ENCODE measurements at regions of chr11 and their contacts with region 1.

Region 1: DNA sequence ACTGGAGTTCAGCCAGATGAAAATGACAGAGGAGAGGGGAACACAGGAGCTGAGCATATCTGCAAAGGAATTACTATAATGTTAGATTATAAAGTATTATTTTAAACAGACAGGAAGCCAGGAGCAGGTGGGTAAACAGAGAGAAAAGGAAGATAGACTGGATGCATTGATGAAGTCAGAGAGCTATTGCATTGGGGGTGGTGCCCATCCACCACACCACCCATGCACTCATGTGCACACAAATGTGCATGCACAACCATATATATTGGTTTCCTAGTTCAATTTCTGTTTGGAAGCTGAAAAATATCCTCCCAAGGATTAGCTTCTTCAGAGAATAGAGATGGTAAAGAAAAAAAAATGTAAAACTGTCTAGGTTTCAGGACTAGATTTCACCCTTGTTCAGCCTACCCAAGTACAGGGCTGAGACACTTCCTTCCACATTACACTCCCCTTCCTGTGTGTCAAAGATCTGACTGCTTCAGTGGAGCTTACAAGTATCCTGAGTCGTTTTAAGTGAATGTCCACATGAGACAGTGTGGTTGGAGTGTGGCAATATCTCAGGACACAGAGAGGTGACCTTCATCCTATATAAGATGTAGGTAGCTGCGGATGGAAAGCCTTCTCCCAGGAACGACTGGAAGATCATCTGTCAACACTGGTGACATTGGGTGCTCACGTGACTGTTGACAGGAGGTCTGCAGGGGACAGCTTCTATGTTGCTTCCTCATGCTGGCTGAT is 12.2 kb upstream of the SMPD1 start:
- DNase-seq: peak in 1 of 5 donors; percentile 37
- H3K4me3 ChIP-seq: peak overlapping the region; percentile 32
- H3K4me3 Mint-ChIP-seq: peak overlapping the region in 2 of 7 donors; percentile 52 to 60
- H3K27ac ChIP-seq: no peak overlapping the region
- H3K27ac Mint-ChIP-seq: peak overlapping the region in 3 of 8 donors; percentile 51 to 78 (median 56)
- H3K4me1 ChIP-seq: peaks cover 21% of the 10 kb centered on the region
- H3K4me1 Mint-ChIP-seq: peaks cover 14 to 22% (median 17%) of the 10 kb centered on the region in 3 donors
- H3K27me3 ChIP-seq: no peaks in the 10 kb centered on the region
- H3K27me3 Mint-ChIP-seq: no peaks in the 10 kb centered on the region

Region 2: GRCh38 chr11:6298605-6299004 is 79.5 kb before region 1 on chr11:
- CTCF ChIA-PET with region 1: no interaction called
- POLR2A ChIA-PET with region 1: no interaction called
- DNase-seq: no peak
- H3K4me3 ChIP-seq: no peak overlapping the region
- H3K4me3 Mint-ChIP-seq: no peak overlapping the region
- H3K27ac ChIP-seq: no peak overlapping the region
- H3K27ac Mint-ChIP-seq: no peak overlapping the region
- H3K4me1 ChIP-seq: no peaks in the 10 kb centered on the region
- H3K4me1 Mint-ChIP-seq: no peaks in the 10 kb centered on the region
- H3K27me3 ChIP-seq: no peaks in the 10 kb centered on the region
- H3K27me3 Mint-ChIP-seq: peaks cover 8 to 40% of the 10 kb centered on the region in 2 donors

Region 3: DNA sequence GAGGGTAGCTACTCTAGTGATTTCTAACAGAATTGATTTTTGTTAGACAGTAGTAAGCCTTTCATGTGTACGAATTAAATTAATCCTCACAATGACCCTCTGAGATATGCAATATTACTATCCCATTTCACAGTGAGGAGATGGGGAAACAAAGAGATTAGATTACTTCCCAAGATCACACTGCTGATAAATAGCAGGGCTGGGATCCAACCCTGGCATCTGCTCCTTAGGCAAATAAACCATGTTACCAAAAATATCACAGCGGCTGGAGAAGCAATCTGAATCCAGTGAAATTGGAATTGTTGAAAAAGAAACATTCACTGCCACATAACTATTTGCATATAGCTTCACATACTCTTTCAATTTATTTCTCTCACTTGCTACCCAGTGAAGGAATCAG is 45.0 kb before region 1 on chr11:
- CTCF ChIA-PET with region 1: no interaction called
- POLR2A ChIA-PET with region 1: no interaction called
- DNase-seq: no peak
- H3K4me3 ChIP-seq: no peak overlapping the region
- H3K4me3 Mint-ChIP-seq: no peak overlapping the region
- H3K27ac ChIP-seq: no peak overlapping the region
- H3K27ac Mint-ChIP-seq: no peak overlapping the region
- H3K4me1 ChIP-seq: no peaks in the 10 kb centered on the region
- H3K4me1 Mint-ChIP-seq: no peaks in the 10 kb centered on the region
- H3K27me3 ChIP-seq: no peaks in the 10 kb centered on the region
- H3K27me3 Mint-ChIP-seq: peaks cover 0 to 15% of the 10 kb centered on the region in 2 donors

Region 4: GRCh38 chr11:6362873-6363678 is 15.0 kb before region 1 on chr11:
- CTCF ChIA-PET with region 1: interaction called, 46 read pairs
- POLR2A ChIA-PET with region 1: no interaction called
- DNase-seq: peak; percentile 28 to 73 (median 33)
- H3K4me3 ChIP-seq: no peak overlapping the region
- H3K4me3 Mint-ChIP-seq: no peak overlapping the region
- H3K27ac ChIP-seq: no peak overlapping the region
- H3K27ac Mint-ChIP-seq: peak overlapping the region in 2 of 8 donors; percentile 6 to 87
- H3K4me1 ChIP-seq: no peaks in the 10 kb centered on the region
- H3K4me1 Mint-ChIP-seq: no peaks in the 10 kb centered on the region
- H3K27me3 ChIP-seq: no peaks in the 10 kb centered on the region
- H3K27me3 Mint-ChIP-seq: no peaks in the 10 kb centered on the region

Region 5: GRCh38 chr11:6402561-6402981 is 24.5 kb after region 1 on chr11:
- CTCF ChIA-PET with region 1: interaction called, 100 read pairs
- POLR2A ChIA-PET with region 1: no interaction called
- DNase-seq: peak; percentile 50 to 97 (median 89)
- H3K4me3 ChIP-seq: peak overlapping the region; percentile 66
- H3K4me3 Mint-ChIP-seq: peak overlapping the region; percentile 69 to 94 (median 85)
- H3K27ac ChIP-seq: peak overlapping the region; percentile 41
- H3K27ac Mint-ChIP-seq: peak overlapping the region; percentile 93 to 99 (median 98)
- H3K4me1 ChIP-seq: peaks cover 88% of the 10 kb centered on the region
- H3K4me1 Mint-ChIP-seq: peaks cover 76 to 96% (median 91%) of the 10 kb centered on the region in 3 donors
- H3K27me3 ChIP-seq: no peaks in the 10 kb centered on the region
- H3K27me3 Mint-ChIP-seq: peaks cover 0 to 5% of the 10 kb centered on the region in 2 donors

Region 6: GRCh38 chr11:6419009-6419631 is 41.0 kb after region 1 on chr11 and contains the start of gene APBB1:
- CTCF ChIA-PET with region 1: interaction called, 25 read pairs
- POLR2A ChIA-PET with region 1: interaction called, 3 read pairs
- DNase-seq: peak; percentile 61 to 83 (median 75)
- H3K4me3 ChIP-seq: peak within 1 kb of the TSS; percentile 77
- H3K4me3 Mint-ChIP-seq: peak within 1 kb of the TSS in 4 of 7 donors; percentile 81 to 93 (median 87)
- H3K27ac ChIP-seq: peak within 1 kb of the TSS; percentile 57
- H3K27ac Mint-ChIP-seq: peak within 1 kb of the TSS; percentile 70 to 96 (median 84)
- H3K4me1 ChIP-seq: peaks cover 49% of the 10 kb centered on the region
- H3K4me1 Mint-ChIP-seq: peaks cover 6 to 10% (median 6%) of the 10 kb centered on the region in 3 donors
- H3K27me3 ChIP-seq: no peaks in the 10 kb centered on the region
- H3K27me3 Mint-ChIP-seq: peaks cover 7 to 15% of the 10 kb centered on the region in 2 donors
- total RNA-seq, gene APBB1: 41.7 to 43.6 TPM

Region 7: GRCh38 chr11:6443269-6444003 is 65.4 kb after region 1 on chr11:
- CTCF ChIA-PET with region 1: interaction called, 467 read pairs
- POLR2A ChIA-PET with region 1: interaction called, 7 read pairs
- DNase-seq: peak; percentile 33 to 69 (median 44)
- H3K4me3 ChIP-seq: no peak overlapping the region
- H3K4me3 Mint-ChIP-seq: no peak overlapping the region
- H3K27ac ChIP-seq: no peak overlapping the region
- H3K27ac Mint-ChIP-seq: no peak overlapping the region
- H3K4me1 ChIP-seq: peaks cover 21% of the 10 kb centered on the region
- H3K4me1 Mint-ChIP-seq: no peaks in the 10 kb centered on the region
- H3K27me3 ChIP-seq: no peaks in the 10 kb centered on the region
- H3K27me3 Mint-ChIP-seq: no peaks in the 10 kb centered on the region

Region 8: GRCh38 chr11:6473481-6474422 is 95.7 kb after region 1 on chr11 and contains the start of gene TRIM3:
- CTCF ChIA-PET with region 1: interaction called, 24 read pairs
- POLR2A ChIA-PET with region 1: no interaction called
- DNase-seq: peak; percentile 55 to 83 (median 80)
- H3K4me3 ChIP-seq: peak within 1 kb of the TSS; percentile 66
- H3K4me3 Mint-ChIP-seq: peak within 1 kb of the TSS; percentile 80 to 94 (median 89)
- H3K27ac ChIP-seq: peak within 1 kb of the TSS; percentile 65
- H3K27ac Mint-ChIP-seq: peak within 1 kb of the TSS; percentile 53 to 95 (median 88)
- H3K4me1 ChIP-seq: peaks cover 14% of the 10 kb centered on the region
- H3K4me1 Mint-ChIP-seq: peaks cover 15 to 30% (median 20%) of the 10 kb centered on the region in 3 donors
- H3K27me3 ChIP-seq: no peaks in the 10 kb centered on the region
- H3K27me3 Mint-ChIP-seq: no peaks in the 10 kb centered on the region
- total RNA-seq, gene TRIM3: 6.4 to 6.8 TPM

Region 9: GRCh38 chr11:6505577-6506240 is 127.6 kb after region 1 on chr11:
- CTCF ChIA-PET with region 1: interaction called, 64 read pairs
- POLR2A ChIA-PET with region 1: interaction called, 3 read pairs
- DNase-seq: peak in 2 of 5 donors; percentile 17 to 21
- H3K4me3 ChIP-seq: no peak overlapping the region
- H3K4me3 Mint-ChIP-seq: no peak overlapping the region
- H3K27ac ChIP-seq: no peak overlapping the region
- H3K27ac Mint-ChIP-seq: peak overlapping the region in 2 of 8 donors; percentile 17 to 57
- H3K4me1 ChIP-seq: no peaks in the 10 kb centered on the region
- H3K4me1 Mint-ChIP-seq: peaks cover 5 to 11% (median 8%) of the 10 kb centered on the region in 3 donors
- H3K27me3 ChIP-seq: no peaks in the 10 kb centered on the region
- H3K27me3 Mint-ChIP-seq: no peaks in the 10 kb centered on the region

Region 10: GRCh38 chr11:6556139-6556949 is 178.3 kb after region 1 on chr11:
- CTCF ChIA-PET with region 1: no interaction called
- POLR2A ChIA-PET with region 1: no interaction called
- DNase-seq: no peak
- H3K4me3 ChIP-seq: no peak overlapping the region
- H3K4me3 Mint-ChIP-seq: no peak overlapping the region
- H3K27ac ChIP-seq: no peak overlapping the region
- H3K27ac Mint-ChIP-seq: peak overlapping the region in 1 of 8 donors; percentile 38
- H3K4me1 ChIP-seq: no peaks in the 10 kb centered on the region
- H3K4me1 Mint-ChIP-seq: no peaks in the 10 kb centered on the region
- H3K27me3 ChIP-seq: no peaks in the 10 kb centered on the region
- H3K27me3 Mint-ChIP-seq: no peaks in the 10 kb centered on the region